Gastrocnemius medialis (tissue), 4 donors: ENCODE measurements at regions of chr15 and their contacts with region 1.

Region 1: GRCh38 chr15:93005133-93005532 is 83.9 kb downstream of the RGMA start:
- DNase-seq: peak; percentile 42 to 82
- ATAC-seq: peak; percentile 25 to 73
- H3K4me3 ChIP-seq: no peak overlapping the region
- H3K27ac ChIP-seq: peak overlapping the region; percentile 44 to 92 (median 54)
- H3K4me1 ChIP-seq: peaks cover 0 to 15% of the 10 kb centered on the region in 2 donors
- H3K27me3 ChIP-seq: no peaks in the 10 kb centered on the region
- CTCF ChIP-seq: no peak
- POLR2A ChIP-seq: no peak

Region 2: GRCh38 chr15:92958105-92958504 is 47.0 kb before region 1 on chr15:
- in situ Hi-C with region 1: no loop called
- intact Hi-C with region 1: loop called (anchors 5 kb)
- DNase-seq: no peak
- ATAC-seq: no peak
- H3K4me3 ChIP-seq: no peak overlapping the region
- H3K27ac ChIP-seq: peak overlapping the region; percentile 30 to 79 (median 50)
- H3K4me1 ChIP-seq: peaks cover 8 to 11% of the 10 kb centered on the region in 2 donors
- H3K27me3 ChIP-seq: no peaks in the 10 kb centered on the region
- CTCF ChIP-seq: no peak
- POLR2A ChIP-seq: no peak